ENCODE measurements at regions of chr15 and their contacts with region 1.

Region 1: DNA sequence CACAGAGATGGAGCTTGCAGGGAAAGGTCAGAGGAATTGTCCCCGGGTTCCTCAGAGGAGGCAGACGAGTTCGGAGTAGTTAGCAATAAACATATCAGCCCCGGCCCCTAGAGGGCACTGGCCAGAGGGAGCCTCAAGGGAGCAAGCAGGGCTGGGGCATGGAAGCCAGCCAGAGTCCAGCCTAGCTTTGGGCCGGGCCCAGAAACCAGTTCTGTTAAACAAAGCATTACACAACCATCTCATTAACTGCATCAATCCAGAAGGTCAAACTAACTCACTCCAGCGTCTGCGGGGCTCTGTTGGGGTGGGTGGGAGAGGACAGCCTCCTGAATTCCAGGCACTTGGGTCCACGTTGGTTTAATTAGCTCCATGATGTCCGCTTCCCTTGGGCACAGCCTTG is 41.0 kb upstream of the IREB2 start:
- DNase-seq: peak; percentile 45
- ATAC-seq: peak; percentile 14; the same call in 1 of the 2 replicates
- H3K4me3 Mint-ChIP-seq: no peak overlapping the region
- H3K27ac Mint-ChIP-seq: no peak overlapping the region
- H3K4me1 Mint-ChIP-seq: peaks cover 66% of the 10 kb centered on the region
- H3K27me3 Mint-ChIP-seq: no peaks in the 10 kb centered on the region; the same call in 1 of the 2 replicates
- CTCF ChIP-seq: no peak

Region 2: DNA sequence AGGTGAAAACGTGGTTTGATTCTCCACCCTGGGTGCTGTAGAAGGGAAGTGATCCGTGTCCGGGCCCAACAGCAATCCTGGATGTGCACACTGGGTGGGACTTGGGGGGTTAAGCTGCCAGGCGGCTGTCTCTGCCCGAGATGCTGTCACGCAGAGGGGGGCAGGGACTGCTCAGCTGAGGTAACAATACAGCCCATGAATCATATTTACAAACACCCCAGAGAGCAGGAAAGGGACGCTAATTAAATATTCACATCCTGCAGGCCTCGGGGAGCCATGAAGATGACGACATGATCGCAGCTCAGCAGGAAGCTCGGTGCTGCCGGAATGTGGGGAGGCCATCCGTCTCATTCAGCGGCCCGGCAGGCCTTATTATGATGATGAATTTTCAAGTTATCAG is 74.7 kb before region 1 on chr15:
- CTCF ChIA-PET with region 1: interaction called, 16 read pairs
- POLR2A ChIA-PET with region 1: no interaction called
- DNase-seq: no peak
- ATAC-seq: peak; percentile 34
- H3K4me3 Mint-ChIP-seq: no peak overlapping the region; the same call in 1 of the 2 replicates
- H3K27ac Mint-ChIP-seq: peak overlapping the region; percentile 54
- H3K4me1 Mint-ChIP-seq: peaks cover 41% of the 10 kb centered on the region
- H3K27me3 Mint-ChIP-seq: no peaks in the 10 kb centered on the region
- CTCF ChIP-seq: no peak

Region 3: GRCh38 chr15:78407608-78408354 is 10.8 kb after region 1 on chr15:
- CTCF ChIA-PET with region 1: interaction called, 21 read pairs
- POLR2A ChIA-PET with region 1: interaction called, 3 read pairs
- DNase-seq: no peak
- ATAC-seq: no peak
- H3K4me3 Mint-ChIP-seq: no peak overlapping the region
- H3K27ac Mint-ChIP-seq: no peak overlapping the region
- H3K4me1 Mint-ChIP-seq: 0 out of 2 replicates have a peak, but pooled peaks cover 6% of the 10 kb centered on the region
- H3K27me3 Mint-ChIP-seq: no peaks in the 10 kb centered on the region
- CTCF ChIP-seq: no peak

Region 4: GRCh38 chr15:78429477-78429876 is 32.5 kb after region 1 on chr15:
- CTCF ChIA-PET with region 1: no interaction called
- POLR2A ChIA-PET with region 1: no interaction called
- DNase-seq: no peak
- ATAC-seq: no peak
- H3K4me3 Mint-ChIP-seq: no peak overlapping the region
- H3K27ac Mint-ChIP-seq: no peak overlapping the region
- H3K4me1 Mint-ChIP-seq: no peaks in the 10 kb centered on the region
- H3K27me3 Mint-ChIP-seq: peaks cover 14% of the 10 kb centered on the region
- CTCF ChIP-seq: no peak

Region 5: DNA sequence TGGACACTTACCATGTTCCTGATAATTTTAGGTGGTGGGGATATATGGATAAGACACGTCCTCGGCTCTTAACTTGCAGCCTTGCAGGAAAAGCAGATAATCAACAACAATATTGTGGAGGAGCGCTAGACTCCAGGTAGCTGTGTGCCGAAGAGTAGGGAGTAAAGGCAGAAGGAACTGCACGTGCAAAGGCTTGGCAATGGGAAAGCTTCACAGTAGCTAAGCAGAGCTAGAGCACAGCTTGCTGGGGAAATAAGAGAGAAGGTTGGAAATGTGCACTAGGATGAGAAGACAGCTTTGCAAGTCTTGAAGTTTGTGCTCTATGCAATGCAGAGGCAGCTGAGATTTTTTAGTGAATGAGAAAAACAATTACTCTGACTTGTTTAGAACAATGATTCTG is 155.6 kb after region 1 on chr15:
- CTCF ChIA-PET with region 1: no interaction called
- POLR2A ChIA-PET with region 1: no interaction called
- DNase-seq: no peak
- ATAC-seq: 0 out of 2 replicates have a peak, but pooled peaks have one; percentile 30
- H3K4me3 Mint-ChIP-seq: no peak overlapping the region
- H3K27ac Mint-ChIP-seq: no peak overlapping the region
- H3K4me1 Mint-ChIP-seq: peaks cover 4% of the 10 kb centered on the region
- H3K27me3 Mint-ChIP-seq: no peaks in the 10 kb centered on the region
- CTCF ChIP-seq: no peak

Measured in WTC11 (cell line).